IMR-90 (cell line): ENCODE measurements at regions of chr20 and their contacts with region 1.

Region 1: GRCh38 chr20:36199345-36200257 is 36.7 kb upstream of the AAR2 start:
- DNase-seq: peak; percentile 75
- ATAC-seq: peak; percentile 99
- H3K4me3 ChIP-seq: no peak overlapping the region
- H3K27ac ChIP-seq: no peak overlapping the region
- H3K4me1 ChIP-seq: no peaks in the 10 kb centered on the region
- H3K27me3 ChIP-seq: no peaks in the 10 kb centered on the region
- CTCF ChIP-seq: peak; percentile 92
- POLR2A ChIP-seq: no peak
- RAD21 ChIP-seq: peak; percentile 90

Region 2: GRCh38 chr20:36154700-36155628 is 44.6 kb before region 1 on chr20 and contains the start of gene EPB41L1:
- CTCF ChIA-PET with region 1: interaction called, 8 read pairs
- POLR2A ChIA-PET with region 1: no interaction called
- dilution Hi-C with region 1: no loop called
- in situ Hi-C with region 1: loop called (anchors 5 kb)
- intact Hi-C with region 1: loop called (anchors 1 kb)
- DNase-seq: no peak
- ATAC-seq: peak; percentile 36
- H3K4me3 ChIP-seq: peak within 1 kb of the TSS; percentile 63
- H3K27ac ChIP-seq: peak within 1 kb of the TSS; percentile 38
- H3K4me1 ChIP-seq: peaks cover 9% of the 10 kb centered on the region
- H3K27me3 ChIP-seq: 0 out of 2 replicates have a peak, but pooled peaks cover 2% of the 10 kb centered on the region
- CTCF ChIP-seq: no peak
- POLR2A ChIP-seq: no peak
- RAD21 ChIP-seq: no peak
- total RNA-seq, gene EPB41L1: 12.5 and 13.9 TPM in 2 replicates

Region 3: DNA sequence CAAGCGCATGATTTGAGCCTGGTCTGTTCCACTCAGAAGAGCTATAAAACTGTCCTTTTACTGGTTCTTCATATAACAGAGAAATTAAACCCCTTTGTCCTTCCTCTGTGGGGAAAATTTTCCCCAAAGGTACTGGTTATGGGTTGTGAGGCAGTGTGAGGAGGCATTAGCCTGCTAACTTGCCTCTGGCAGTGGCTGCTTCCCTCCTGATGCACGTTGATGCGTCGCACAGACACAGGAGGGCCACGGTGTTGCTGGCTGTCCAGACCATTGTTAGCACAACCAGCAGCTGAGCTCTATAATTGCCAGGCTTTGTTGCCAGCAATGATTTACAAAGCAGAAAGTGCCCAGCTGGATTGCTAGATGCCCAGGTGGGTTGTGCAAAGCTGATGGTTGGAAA is 46.8 kb after region 1 on chr20:
- CTCF ChIA-PET with region 1: no interaction called
- POLR2A ChIA-PET with region 1: no interaction called
- dilution Hi-C with region 1: no loop called
- in situ Hi-C with region 1: no loop called
- intact Hi-C with region 1: no loop called
- DNase-seq: no peak
- ATAC-seq: no peak
- H3K4me3 ChIP-seq: no peak overlapping the region
- H3K27ac ChIP-seq: no peak overlapping the region
- H3K4me1 ChIP-seq: no peaks in the 10 kb centered on the region
- H3K27me3 ChIP-seq: no peaks in the 10 kb centered on the region
- CTCF ChIP-seq: no peak
- POLR2A ChIP-seq: no peak
- RAD21 ChIP-seq: no peak

Region 4: GRCh38 chr20:36439040-36439730 is 239.6 kb after region 1 on chr20:
- CTCF ChIA-PET with region 1: interaction called, 9 read pairs
- POLR2A ChIA-PET with region 1: no interaction called
- dilution Hi-C with region 1: no loop called
- in situ Hi-C with region 1: no loop called
- intact Hi-C with region 1: loop called (anchors 1 kb)
- DNase-seq: peak; percentile 43
- ATAC-seq: peak; percentile 91
- H3K4me3 ChIP-seq: no peak overlapping the region
- H3K27ac ChIP-seq: no peak overlapping the region
- H3K4me1 ChIP-seq: no peaks in the 10 kb centered on the region
- H3K27me3 ChIP-seq: peaks cover 40% of the 10 kb centered on the region
- CTCF ChIP-seq: peak; percentile 85
- POLR2A ChIP-seq: no peak
- RAD21 ChIP-seq: peak; percentile 89

Region 5: DNA sequence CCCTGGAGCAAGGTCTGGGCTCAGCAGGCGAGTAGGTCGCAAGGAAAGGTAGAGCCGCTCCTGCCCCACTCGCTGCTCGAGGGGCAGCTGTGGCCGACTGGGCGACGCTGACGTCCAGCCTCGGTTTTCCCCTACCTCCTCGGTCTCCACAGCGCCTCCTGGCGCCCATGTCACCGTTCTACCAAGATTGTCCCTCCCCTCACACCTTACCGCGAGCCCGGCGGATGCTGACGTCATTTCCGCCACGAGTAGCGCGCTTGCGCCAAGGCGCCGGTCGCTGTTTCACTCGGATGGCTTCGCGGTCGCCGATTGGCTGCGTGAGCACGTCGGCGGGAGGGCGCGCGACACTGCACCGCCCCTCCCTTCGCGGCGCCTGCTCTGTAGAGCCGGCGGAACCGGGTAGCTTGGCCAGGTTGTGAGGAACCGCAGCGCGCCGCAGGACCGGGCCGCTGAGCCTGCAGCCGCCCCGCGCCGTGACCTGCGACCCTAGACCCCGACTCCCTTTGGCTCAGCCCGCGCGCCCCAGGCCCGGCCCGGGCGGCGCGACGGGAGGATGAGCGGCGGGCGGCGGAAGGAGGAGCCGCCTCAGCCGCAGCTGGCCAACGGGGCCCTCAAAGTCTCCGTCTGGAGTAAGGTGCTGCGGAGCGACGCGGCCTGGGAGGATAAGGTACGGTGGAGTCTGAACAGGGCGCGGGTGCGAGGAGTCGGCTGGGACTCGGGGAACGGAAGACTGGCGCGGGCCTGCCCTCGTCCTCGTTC is 406.0 kb after region 1 on chr20 and contains the start of gene RAB5IF:
- CTCF ChIA-PET with region 1: no interaction called
- POLR2A ChIA-PET with region 1: interaction called, 19 read pairs
- dilution Hi-C with region 1: no loop called
- in situ Hi-C with region 1: no loop called
- intact Hi-C with region 1: no loop called
- DNase-seq: peak; percentile 98
- ATAC-seq: peak; percentile 99
- H3K4me3 ChIP-seq: peak within 1 kb of the TSS; percentile 84
- H3K27ac ChIP-seq: peak within 1 kb of the TSS; percentile 68
- H3K4me1 ChIP-seq: peaks cover 4% of the 10 kb centered on the region; the same call in 1 of the 2 replicates
- H3K27me3 ChIP-seq: no peaks in the 10 kb centered on the region
- CTCF ChIP-seq: peak; percentile 98
- POLR2A ChIP-seq: peak; percentile 80
- RAD21 ChIP-seq: peak; percentile 74
- total RNA-seq, gene RAB5IF: 74.0 and 90.3 TPM in 2 replicates

Region 6: DNA sequence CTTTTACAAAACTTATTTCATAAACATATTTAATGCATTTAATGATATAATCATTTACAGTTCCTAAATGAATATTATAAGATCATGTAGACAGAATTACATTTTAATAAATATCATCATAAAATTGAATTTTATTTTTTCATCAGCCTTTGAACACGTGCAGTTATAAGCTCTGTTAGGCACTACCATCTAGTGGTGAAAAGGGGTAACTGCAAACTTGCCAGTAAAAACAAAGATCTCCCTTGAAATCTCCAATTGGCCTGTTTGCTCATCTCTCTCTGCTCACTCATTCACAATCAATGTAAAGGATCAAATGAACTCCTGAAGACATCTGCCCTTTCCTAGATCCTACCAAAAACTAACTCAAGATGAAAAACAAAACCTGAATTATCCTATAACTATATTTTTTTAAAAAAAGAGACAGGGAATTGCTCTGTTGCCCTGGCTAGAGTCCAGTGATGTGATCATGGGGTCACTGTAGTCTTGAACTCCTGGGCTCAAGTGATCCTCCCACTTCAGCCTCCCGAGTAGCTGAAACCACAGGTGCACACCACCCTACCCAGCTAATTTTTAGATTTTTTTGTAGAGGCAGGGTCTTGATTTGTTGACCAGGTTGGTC is 720.2 kb after region 1 on chr20:
- CTCF ChIA-PET with region 1: no interaction called
- POLR2A ChIA-PET with region 1: no interaction called
- dilution Hi-C with region 1: no loop called
- in situ Hi-C with region 1: loop called (anchors 25 kb)
- intact Hi-C with region 1: no loop called
- DNase-seq: peak; percentile 74
- ATAC-seq: peak; percentile 92
- H3K4me3 ChIP-seq: no peak overlapping the region
- H3K27ac ChIP-seq: no peak overlapping the region
- H3K4me1 ChIP-seq: no peaks in the 10 kb centered on the region
- H3K27me3 ChIP-seq: no peaks in the 10 kb centered on the region
- CTCF ChIP-seq: peak; percentile 90
- POLR2A ChIP-seq: no peak
- RAD21 ChIP-seq: peak; percentile 80